AG04449 (cell line): ENCODE measurements at regions of chr1 and their contacts with region 1.

Region 1: GRCh38 chr1:24150234-24151174 is 7.6 kb upstream of the IL22RA1 start:
- DNase-seq: no peak
- H3K4me3 ChIP-seq: no peak overlapping the region; the same call in 1 of the 2 replicates
- CTCF ChIP-seq: peak; percentile 94

Region 2: DNA sequence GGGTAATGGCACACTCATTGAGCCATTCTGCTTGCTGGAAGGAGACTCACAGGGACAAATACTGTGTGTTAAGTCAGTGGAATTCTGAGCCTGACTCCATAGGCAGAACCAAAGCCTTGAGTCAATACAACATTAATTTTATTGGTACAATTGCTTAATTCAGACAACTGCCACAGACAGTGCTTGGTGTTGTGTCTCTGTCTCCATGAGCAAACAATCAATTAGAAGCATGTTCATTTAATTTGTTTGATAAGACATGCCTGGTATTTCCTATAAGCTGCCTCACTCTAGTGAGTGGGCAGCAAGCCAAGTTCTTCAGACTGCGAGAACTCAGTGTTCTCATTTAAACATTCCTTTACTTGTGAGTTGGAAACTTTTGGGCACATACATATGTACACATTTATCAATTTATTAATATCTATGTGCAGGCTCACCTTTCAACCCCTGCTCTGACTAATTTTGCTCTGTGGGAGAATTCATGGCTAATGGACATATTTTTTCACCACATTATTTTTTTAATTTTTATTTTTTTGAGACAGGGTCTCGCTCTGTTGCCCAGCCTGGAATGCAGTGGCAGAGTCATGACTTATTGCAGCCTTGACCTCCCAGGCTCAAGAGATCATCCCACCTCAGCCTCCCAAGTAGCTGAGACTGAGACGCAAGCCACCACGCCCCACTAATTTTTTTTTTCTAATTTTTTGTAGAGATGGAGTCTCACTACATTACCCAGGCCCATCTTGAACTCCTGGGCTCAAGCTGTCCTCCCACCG is 165.9 kb before region 1 on chr1:
- CTCF ChIA-PET with region 1: no interaction called
- POLR2A ChIA-PET with region 1: no interaction called
- DNase-seq: peak; percentile 55
- H3K4me3 ChIP-seq: no peak overlapping the region
- CTCF ChIP-seq: no peak

Region 3: DNA sequence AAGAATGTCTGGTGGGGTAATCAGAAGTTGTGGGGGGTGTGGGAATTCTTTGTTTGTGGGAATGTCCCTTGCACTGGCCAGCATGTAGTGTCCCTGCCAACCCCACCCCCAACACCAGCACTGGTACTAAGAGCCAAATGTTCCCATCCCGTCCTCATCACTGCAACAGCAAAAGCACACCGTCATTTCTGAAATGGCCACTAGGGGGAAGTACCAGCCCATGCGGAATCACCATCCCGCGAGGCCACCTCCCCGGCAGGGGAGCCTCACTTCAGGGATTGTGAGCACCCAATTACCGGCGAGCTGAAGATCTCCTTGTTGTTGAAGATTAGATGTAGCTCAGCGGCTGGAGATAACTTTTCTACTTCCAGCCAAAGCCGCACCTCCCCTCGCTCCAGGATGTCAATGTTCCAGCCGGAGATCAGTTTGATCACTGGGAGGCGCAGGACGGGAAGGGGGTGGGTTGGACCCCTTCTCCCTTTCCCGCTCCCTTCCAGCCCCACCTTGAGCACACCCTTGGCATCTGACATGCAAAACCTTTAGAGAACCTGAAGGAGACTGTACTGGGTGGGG is 79.6 kb before region 1 on chr1:
- CTCF ChIA-PET with region 1: interaction called, 15 read pairs
- POLR2A ChIA-PET with region 1: no interaction called
- DNase-seq: no peak
- H3K4me3 ChIP-seq: no peak overlapping the region
- CTCF ChIP-seq: peak; percentile 87

Region 4: DNA sequence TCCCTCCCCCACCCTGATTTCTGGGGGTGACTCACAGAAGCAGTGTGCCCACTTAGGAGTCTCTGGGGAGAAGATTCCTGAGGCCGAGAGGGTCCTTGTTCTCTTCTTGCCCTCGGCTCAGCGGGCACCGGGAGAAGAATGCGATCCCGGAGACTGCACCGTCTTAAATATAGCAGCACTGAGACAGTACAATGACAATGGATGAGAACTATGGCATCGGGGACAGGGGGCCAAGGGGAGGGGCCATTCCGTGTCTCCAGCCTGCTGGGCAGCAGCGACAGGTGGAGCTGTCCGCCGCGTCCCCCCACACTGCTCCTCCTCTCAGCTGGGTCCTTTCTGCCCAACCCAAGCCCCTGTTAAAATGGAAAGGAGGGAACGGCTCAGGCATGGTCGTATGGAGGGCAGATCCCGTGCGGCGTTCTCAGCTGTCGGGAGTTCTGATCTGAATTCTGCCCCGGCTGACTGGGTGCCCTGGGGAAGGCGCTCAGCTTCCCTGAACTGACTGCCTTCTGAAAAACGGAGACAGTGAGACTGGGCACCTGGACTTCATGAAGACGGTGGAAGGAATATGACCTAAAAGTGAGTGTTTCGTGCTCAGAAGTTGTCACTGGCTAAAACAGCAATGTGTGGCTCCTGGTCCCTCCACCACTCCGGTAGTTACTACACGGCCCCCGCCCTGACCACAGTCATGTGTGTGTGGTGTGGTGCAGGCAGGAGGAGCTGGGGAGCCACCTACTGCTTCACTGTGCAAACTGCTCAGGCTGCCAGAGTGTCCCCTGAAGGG is 38.3 kb before region 1 on chr1 and contains the start of gene MYOM3:
- CTCF ChIA-PET with region 1: interaction called, 11 read pairs
- POLR2A ChIA-PET with region 1: no interaction called
- DNase-seq: no peak
- H3K4me3 ChIP-seq: peak within 1 kb of the TSS; percentile 32
- CTCF ChIP-seq: peak; percentile 65

Region 5: DNA sequence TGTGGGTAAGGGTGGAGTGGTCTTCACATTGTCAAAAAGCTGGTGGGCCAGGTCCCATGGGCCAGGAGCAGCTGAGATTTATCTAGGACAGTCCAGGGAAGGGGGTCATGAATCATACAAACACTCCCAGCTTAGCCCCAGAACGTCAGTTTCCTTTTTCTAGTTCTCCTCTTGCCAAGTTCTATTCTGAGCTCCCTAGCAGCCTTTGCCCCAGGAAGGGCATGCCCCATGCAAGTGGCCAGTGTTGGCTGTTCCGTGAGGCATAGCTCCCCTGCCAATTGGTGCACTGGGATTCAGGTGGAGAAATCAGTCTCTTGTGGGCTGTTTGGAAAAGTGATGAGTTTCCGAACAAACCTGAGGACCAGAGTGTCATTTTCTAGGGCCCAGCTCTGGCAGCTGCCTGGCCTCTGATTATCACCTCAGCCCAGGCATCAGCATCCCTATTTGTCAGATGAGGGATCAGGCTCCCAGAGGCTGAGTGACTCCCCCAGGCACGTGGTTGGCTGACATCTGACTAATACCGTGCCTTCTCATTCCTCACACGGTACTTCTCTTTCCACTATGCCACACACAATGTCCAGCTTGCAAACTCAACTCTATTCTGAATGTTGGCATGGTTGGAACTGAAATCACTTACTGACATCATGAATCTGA is 24.4 kb before region 1 on chr1:
- CTCF ChIA-PET with region 1: interaction called, 21 read pairs
- POLR2A ChIA-PET with region 1: no interaction called
- DNase-seq: no peak
- H3K4me3 ChIP-seq: no peak overlapping the region
- CTCF ChIP-seq: no peak

Region 6: DNA sequence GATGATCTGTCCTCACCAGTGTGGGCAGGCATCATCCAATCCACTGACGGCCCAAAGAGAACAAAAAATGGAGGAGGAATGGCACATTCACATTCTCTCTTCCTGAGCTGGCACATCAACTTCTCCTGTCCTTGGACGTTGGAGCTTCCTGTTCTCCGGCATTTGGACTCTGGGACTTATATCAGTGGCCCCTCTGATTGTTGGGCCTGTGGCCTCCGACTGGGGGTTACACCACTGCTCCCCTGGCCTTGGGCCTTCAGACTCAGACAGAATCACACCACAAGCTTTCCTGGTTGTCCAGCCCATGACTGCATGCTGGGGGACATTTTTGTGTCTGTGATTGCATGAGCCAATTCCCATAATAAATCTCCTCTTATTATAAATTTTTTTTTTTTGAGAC is 16.5 kb after region 1 on chr1:
- CTCF ChIA-PET with region 1: interaction called, 40 read pairs
- POLR2A ChIA-PET with region 1: no interaction called
- DNase-seq: no peak
- H3K4me3 ChIP-seq: no peak overlapping the region
- CTCF ChIP-seq: no peak

Region 7: GRCh38 chr1:24289937-24290595 is 139.6 kb after region 1 on chr1:
- CTCF ChIA-PET with region 1: no interaction called
- POLR2A ChIA-PET with region 1: no interaction called
- DNase-seq: peak; percentile 66
- H3K4me3 ChIP-seq: no peak overlapping the region
- CTCF ChIP-seq: no peak

Region 8: DNA sequence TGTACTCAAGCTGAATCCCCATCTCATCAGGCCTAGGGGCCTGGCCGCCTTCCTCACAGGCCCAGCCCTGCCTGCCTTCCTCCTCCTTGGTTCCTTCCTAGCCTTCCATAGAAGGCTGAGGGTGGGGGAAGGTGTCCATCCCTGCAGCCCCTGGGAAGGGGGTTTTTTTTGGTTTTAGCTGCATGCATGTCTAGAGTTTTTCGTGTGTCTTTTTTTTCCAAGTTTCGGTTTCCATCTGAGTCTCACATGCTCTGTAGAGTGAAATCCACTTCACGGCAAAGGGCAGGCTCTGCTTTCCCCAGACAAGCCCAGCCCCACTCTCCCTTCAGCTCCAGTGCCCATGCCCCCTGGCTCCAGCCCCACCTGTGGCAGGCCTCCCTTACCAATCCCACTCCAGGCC is 200.7 kb after region 1 on chr1:
- CTCF ChIA-PET with region 1: no interaction called
- POLR2A ChIA-PET with region 1: no interaction called
- DNase-seq: no peak
- H3K4me3 ChIP-seq: no peak overlapping the region
- CTCF ChIP-seq: no peak